ENCODE measurements at regions of chr1 and their contacts with region 1.

Region 1: GRCh38 chr1:16206547-16207317 is 5.7 kb downstream of the ARHGEF19 start:
- DNase-seq: peak; percentile 96 to 97
- H3K4me3 ChIP-seq: peak overlapping the region; percentile 69
- H3K4me3 Mint-ChIP-seq: peak overlapping the region; percentile 78
- H3K27ac Mint-ChIP-seq: peak overlapping the region; percentile 91
- H3K4me1 ChIP-seq: peaks cover 4% of the 10 kb centered on the region
- H3K4me1 Mint-ChIP-seq: no peaks in the 10 kb centered on the region
- H3K27me3 ChIP-seq: no peaks in the 10 kb centered on the region
- H3K27me3 Mint-ChIP-seq: no peaks in the 10 kb centered on the region
- CTCF ChIP-seq: no peak

Region 2: DNA sequence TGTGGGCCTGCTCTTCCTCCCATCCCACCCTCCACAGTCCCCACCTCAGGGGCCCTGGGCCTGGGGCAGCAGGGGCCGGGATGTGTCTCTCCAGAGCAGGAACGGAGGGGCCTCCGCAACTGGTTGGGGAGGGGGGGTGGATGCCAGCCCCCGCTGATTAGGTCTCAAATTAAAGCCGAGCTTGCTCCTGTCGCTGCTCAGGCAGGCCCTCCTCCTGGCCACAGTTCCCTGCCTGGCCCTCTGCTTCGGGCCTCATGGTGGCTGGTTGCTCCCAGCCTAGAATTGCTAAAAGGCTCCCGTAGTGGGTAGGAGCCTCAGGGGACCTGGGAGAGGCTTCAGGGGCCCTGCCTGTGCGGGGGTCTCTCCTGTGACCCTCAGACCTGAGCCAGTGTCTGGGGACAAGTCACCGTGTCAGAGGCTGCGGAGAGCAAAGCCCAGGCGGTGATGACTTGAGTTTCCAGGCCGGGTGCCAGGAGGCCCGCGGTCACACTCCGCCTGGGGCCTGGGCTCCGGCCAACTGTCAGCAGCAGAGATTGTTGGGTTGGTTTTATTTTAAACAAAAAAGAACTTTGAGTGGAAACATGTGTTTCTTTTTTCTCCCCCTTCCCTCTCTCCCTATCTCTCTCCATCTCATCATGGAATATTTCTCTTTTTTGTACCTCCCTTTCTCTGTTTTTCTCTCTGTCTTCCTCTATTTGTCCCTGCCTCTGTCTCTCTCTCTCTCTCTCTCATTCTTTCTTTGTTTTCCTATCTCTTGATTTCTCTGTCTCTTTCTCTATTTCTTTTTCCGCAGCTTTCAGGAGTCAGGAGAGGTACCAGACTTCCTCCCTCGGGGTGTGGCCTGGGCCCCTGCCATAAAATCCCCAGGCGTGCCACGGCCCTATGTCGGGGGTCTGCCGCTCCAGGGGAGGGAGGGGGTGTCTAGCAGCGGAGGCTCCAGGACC is 30.9 kb before region 1 on chr1:
- CTCF ChIA-PET with region 1: no interaction called
- POLR2A ChIA-PET with region 1: no interaction called
- intact Hi-C with region 1: no loop called
- DNase-seq: no peak
- H3K4me3 ChIP-seq: no peak overlapping the region
- H3K4me3 Mint-ChIP-seq: no peak overlapping the region
- H3K27ac Mint-ChIP-seq: peak overlapping the region; percentile 1
- H3K4me1 ChIP-seq: peaks cover 57% of the 10 kb centered on the region
- H3K4me1 Mint-ChIP-seq: peaks cover 37% of the 10 kb centered on the region
- H3K27me3 ChIP-seq: no peaks in the 10 kb centered on the region
- H3K27me3 Mint-ChIP-seq: no peaks in the 10 kb centered on the region
- CTCF ChIP-seq: no peak

Region 3: DNA sequence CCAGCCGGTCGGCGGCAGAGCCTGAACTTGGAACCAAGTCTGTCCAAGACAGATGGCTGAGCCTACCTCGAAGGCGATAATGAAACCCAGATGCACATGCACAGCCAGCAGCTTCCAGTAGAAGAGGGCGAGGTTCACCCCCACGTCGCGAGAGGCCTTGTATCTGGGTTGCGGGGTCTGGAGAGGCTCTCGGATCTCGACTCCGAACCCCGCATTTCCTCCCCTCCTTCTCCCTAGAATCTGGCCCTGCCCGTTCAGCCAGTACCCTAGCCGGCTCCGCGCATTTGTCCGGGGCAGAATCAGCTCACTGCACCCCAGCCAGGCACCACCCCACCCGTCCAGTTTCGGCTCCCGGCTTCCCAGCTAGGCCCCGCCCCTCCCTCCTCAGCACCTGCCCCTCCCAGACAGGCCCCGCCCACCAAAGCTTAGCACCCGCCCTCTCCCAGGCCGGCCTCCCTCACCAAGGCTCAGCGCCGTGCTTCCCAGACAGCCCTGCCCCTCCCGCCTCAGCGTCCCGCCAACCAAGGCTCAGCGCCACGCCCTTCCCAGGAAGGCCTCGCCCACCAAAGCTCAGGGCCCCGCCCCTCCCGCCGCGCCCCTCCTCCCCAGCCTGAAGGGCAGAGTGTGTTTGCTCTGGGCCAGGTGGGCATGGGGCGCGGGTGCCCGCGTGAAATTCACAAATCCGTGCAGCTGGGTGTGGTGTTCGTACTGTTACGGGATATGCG is 10.5 kb after region 1 on chr1:
- CTCF ChIA-PET with region 1: interaction called, 11 read pairs
- POLR2A ChIA-PET with region 1: interaction called, 28 read pairs
- intact Hi-C with region 1: loop called (anchors 1 kb)
- DNase-seq: peak; percentile 95 to 97
- H3K4me3 ChIP-seq: peak overlapping the region; percentile 51
- H3K4me3 Mint-ChIP-seq: peak overlapping the region; percentile 79
- H3K27ac Mint-ChIP-seq: no peak overlapping the region
- H3K4me1 ChIP-seq: peaks cover 11% of the 10 kb centered on the region
- H3K4me1 Mint-ChIP-seq: peaks cover 7% of the 10 kb centered on the region
- H3K27me3 ChIP-seq: no peaks in the 10 kb centered on the region
- H3K27me3 Mint-ChIP-seq: peaks cover 6% of the 10 kb centered on the region
- CTCF ChIP-seq: no peak

Region 4: DNA sequence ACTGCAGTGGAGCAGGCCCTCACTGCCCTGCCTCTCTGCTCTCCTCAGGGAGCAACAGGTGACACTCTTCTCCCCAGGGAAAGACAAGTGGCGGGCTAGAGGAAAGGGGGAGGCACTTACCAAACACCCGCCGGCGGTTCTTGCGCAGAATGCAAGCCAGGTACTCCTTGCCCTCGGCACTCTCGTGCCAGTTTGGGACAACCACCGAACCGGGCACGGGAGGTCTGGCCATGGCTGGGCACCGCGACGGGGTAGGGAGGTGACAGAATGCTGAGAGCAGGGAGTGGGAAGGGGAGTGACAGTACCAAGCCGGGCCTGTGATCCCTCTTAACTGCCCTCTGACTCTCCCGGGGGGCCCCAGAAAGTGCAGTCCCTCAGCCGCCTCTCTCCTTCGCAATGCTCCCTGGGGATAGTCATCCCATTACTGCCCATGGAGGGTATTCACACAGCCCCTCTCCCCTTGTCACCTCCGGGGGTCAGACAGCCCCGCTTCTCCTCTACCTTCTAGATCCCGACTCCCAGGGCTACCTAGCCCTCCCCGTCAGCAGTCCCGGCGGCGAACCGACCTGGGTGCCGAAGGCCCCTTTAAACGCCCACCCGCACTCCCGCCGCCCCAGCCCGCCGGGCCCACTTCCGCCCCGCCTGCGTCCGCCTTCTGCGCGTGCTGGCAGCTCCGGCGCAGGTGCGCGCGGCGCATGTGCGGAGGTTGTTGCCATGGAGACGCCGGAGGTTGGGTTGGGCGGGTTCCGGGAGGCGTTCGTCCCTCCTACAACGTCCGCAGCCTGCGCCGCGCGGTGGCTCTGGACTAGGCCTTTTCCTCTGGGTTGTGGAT is 30.0 kb after region 1 on chr1 and contains the start of gene CPLANE2:
- CTCF ChIA-PET with region 1: no interaction called
- POLR2A ChIA-PET with region 1: no interaction called
- intact Hi-C with region 1: loop called (anchors 1 kb)
- DNase-seq: peak; percentile 92 to 93
- H3K4me3 ChIP-seq: peak within 1 kb of the TSS; percentile 68
- H3K4me3 Mint-ChIP-seq: peak within 1 kb of the TSS; percentile 82
- H3K27ac Mint-ChIP-seq: peak within 1 kb of the TSS; percentile 93
- H3K4me1 ChIP-seq: 0 out of 2 replicates have a peak, but pooled peaks cover 5% of the 10 kb centered on the region
- H3K4me1 Mint-ChIP-seq: no peaks in the 10 kb centered on the region
- H3K27me3 ChIP-seq: no peaks in the 10 kb centered on the region
- H3K27me3 Mint-ChIP-seq: no peaks in the 10 kb centered on the region
- CTCF ChIP-seq: no peak
- total RNA-seq, gene CPLANE2: 2.1 and 4.2 TPM in 2 replicates

Region 5: GRCh38 chr1:16243936-16244649 is 37.4 kb after region 1 on chr1:
- CTCF ChIA-PET with region 1: interaction called, 3 read pairs
- POLR2A ChIA-PET with region 1: interaction called, 3 read pairs
- intact Hi-C with region 1: loop called (anchors 1 kb)
- DNase-seq: peak; percentile 67 to 73
- H3K4me3 ChIP-seq: no peak overlapping the region
- H3K4me3 Mint-ChIP-seq: no peak overlapping the region
- H3K27ac Mint-ChIP-seq: no peak overlapping the region
- H3K4me1 ChIP-seq: no peaks in the 10 kb centered on the region
- H3K4me1 Mint-ChIP-seq: no peaks in the 10 kb centered on the region
- H3K27me3 ChIP-seq: no peaks in the 10 kb centered on the region
- H3K27me3 Mint-ChIP-seq: no peaks in the 10 kb centered on the region
- CTCF ChIP-seq: peak; percentile 69

Region 6: GRCh38 chr1:16286122-16286521 is 79.4 kb after region 1 on chr1:
- CTCF ChIA-PET with region 1: no interaction called
- POLR2A ChIA-PET with region 1: interaction called, 12 read pairs
- intact Hi-C with region 1: no loop called
- DNase-seq: no peak
- H3K4me3 ChIP-seq: no peak overlapping the region
- H3K4me3 Mint-ChIP-seq: no peak overlapping the region
- H3K27ac Mint-ChIP-seq: no peak overlapping the region
- H3K4me1 ChIP-seq: no peaks in the 10 kb centered on the region
- H3K4me1 Mint-ChIP-seq: no peaks in the 10 kb centered on the region
- H3K27me3 ChIP-seq: no peaks in the 10 kb centered on the region
- H3K27me3 Mint-ChIP-seq: no peaks in the 10 kb centered on the region
- CTCF ChIP-seq: no peak